ENCODE measurements at regions of chr20 and their contacts with region 1.

Region 1: DNA sequence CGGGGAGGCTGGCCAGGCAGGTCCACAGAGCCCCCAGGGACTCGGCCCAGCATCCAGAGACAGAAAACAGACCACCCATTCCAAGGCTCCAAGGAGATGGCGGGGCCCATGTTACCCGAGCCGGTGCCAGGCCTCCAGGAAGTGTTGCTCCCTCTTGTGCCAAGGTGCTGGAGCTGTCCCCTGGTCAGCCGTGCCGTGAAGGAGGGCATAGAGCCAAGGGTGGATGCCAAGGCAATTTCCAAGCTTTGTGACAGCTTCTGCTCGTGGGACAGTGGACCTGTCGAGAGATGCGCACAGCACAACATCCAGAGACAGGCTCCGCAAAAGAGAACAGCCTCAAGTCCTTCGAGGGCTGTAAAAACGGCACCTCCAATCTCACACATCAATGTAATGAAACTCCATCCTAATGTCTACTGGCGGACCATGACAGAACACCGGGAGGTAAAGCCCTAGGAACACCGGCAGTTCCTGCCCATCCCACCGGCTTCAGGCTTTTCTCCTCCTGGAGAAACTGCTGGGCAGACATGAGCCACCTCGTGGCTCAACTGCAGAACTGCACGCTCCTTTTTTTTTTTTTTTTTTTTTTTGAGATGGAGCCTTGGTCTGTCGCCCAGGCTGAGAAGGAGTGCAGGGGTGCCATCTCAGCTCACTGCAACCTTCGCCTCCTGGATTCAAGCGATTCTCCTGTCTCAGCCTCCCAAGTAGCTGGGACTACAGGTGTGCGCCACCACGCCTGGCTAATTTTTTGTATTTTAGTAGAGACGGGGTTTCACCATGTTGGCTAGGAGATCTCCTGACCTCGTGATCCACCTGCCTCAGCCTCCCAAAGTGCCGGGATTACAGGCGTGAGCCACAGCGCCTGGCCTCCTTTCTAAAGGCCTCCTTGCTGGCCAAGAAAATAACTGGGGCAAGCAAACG is 30.9 kb upstream of the AVP start:
- DNase-seq: no peak
- H3K4me3 ChIP-seq: no peak overlapping the region
- CTCF ChIP-seq: peak; percentile 68

Region 2: DNA sequence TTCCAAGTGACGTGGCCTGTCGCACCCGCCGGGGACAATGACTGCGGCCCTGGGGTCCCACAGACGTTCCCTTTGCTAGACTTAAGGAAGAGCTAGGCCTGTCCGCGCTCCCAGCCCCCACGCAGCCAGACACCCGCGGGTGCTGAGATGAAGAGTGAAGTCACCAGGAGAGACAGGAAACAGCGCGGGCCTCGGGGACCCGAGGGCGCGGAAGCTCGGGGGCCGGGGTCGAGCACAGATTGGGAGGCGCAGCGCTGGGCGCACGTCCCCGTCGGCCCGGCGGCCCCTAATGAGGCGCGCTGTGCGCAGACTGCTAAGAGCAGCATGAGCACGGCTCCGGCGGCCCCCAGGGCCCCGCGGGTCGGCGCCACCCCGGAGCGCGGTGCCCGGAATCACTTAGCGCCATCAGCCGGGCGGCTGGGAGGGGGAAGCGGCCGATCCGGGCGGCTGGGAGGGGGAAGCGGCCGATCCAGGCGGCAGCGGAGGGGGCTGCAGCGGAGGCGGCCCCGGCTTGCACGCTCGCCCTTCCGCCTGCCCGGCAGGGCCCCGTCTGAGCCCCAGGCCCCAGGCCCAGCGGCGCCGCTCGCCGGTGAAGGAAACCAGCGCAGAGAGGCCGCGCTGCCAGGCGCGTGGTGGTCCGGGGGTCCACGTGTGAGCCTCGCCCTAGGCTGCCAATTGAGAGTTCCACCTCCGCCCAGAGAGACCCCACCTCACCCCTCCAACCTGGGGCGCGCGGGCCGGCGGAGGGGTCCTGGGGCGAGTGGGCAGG is 22.7 kb before region 1 on chr20:
- CTCF ChIA-PET with region 1: interaction called, 16 read pairs
- POLR2A ChIA-PET with region 1: no interaction called
- DNase-seq: no peak
- H3K4me3 ChIP-seq: peak overlapping the region; percentile 34
- CTCF ChIP-seq: no peak

Region 3: DNA sequence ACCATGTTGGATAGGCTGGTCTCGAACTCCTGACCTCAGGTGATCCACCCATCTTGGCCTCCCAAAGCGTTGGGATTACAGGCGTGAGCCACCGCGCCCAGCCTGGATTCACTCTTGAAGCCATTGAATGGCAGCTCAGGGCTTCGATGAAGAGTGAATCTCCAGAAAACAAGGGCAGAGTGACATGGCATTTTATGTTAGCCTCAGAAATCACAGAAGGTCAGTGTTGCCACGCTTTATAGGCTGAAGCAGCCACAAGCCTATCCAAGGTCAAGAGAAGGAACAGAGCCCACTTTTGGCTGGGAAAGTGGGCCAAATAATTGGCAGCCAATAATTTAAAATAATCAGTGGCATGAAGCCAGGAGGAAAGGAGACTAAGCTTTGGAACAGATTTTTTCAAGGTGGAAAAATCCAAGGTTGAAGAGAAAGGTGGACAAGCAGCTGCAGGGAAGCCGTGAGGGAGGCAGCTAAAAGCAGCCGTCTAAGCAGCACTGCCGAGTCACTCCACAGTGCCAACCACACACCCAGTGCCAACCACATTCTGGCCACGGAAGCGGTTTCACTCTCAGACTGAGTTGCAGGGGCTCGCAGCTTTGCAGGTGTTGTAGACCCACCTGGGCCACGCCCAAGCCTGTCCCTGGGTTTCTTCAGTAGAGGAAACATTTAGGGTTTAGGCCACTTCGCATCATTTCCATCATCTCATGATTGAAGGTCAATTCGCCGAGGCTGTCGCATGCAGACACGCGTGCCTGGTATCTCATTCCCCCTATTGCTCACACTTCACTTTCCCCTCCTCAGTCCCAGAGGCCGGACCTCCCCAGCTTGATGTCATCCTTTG is 13.5 kb before region 1 on chr20:
- CTCF ChIA-PET with region 1: interaction called, 17 read pairs
- POLR2A ChIA-PET with region 1: no interaction called
- DNase-seq: no peak
- H3K4me3 ChIP-seq: no peak overlapping the region
- CTCF ChIP-seq: no peak

Measured in AG04449 (cell line).